ENCODE measurements at regions of chr17 and their contacts with region 1.

Region 1: DNA sequence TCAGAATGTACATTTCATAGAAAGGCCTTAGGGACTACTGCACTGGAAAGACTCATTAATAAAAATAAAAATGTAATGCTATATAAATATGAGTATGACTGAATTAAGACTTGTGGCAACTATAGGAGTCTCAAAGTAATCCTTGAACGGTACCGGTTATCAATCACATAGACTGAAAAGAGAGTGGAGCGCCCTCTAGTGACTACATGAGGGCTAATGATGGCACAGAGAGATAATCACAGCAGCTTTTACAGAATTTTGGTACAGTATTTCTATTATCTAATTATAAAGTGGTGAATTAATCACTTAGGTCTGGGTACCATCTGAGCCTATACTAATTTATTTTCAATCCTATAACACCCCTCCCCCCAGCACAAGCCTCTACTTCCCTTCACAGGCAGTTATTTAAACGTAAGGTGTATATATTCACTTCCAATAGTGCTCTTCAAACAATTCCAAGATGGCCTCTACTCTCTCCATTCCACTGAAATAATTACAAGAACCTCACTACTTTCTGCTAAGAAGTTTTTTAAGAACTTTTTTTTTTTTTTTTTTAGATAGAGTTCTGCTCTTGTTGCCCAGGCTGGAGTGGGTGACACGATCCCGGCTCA is 40.7 kb upstream of the ANKFY1 start:
- DNase-seq: no peak
- ATAC-seq: peak; percentile 64

Region 2: GRCh38 chr17:4366327-4367063 is 62.0 kb after region 1 on chr17 and contains the start of gene UBE2G1:
- intact Hi-C with region 1: loop called (anchors 10 kb)
- DNase-seq: peak; percentile 99
- ATAC-seq: peak; percentile 93
- total RNA-seq, gene UBE2G1: 107 TPM

Measured in Right ventricle myocardium superior (tissue), 1 donor.